Heart right ventricle (tissue), 16 donors: ENCODE measurements at regions of chr4 and their contacts with region 1.

Region 1: GRCh38 chr4:59979061-59979460 is 1221.1 kb upstream of the ADGRL3 start:
- DNase-seq: no peak
- ATAC-seq: no peak
- H3K4me3 ChIP-seq: no peak overlapping the region
- H3K27ac ChIP-seq: no peak overlapping the region
- H3K4me1 ChIP-seq: no peaks in the 10 kb centered on the region
- H3K27me3 ChIP-seq: no peaks in the 10 kb centered on the region
- CTCF ChIP-seq: no peak

Region 2: GRCh38 chr4:59994118-59994517 is 15.1 kb after region 1 on chr4:
- intact Hi-C with region 1: loop called in 1 of 10 experiments (anchors 1 kb)
- DNase-seq: no peak
- ATAC-seq: peak in 1 of 8 donors; percentile 57
- H3K4me3 ChIP-seq: no peak overlapping the region
- H3K27ac ChIP-seq: no peak overlapping the region
- H3K4me1 ChIP-seq: no peaks in the 10 kb centered on the region
- H3K27me3 ChIP-seq: no peaks in the 10 kb centered on the region
- CTCF ChIP-seq: peak in 8 of 9 donors; percentile 12 to 46 (median 36)

Region 3: DNA sequence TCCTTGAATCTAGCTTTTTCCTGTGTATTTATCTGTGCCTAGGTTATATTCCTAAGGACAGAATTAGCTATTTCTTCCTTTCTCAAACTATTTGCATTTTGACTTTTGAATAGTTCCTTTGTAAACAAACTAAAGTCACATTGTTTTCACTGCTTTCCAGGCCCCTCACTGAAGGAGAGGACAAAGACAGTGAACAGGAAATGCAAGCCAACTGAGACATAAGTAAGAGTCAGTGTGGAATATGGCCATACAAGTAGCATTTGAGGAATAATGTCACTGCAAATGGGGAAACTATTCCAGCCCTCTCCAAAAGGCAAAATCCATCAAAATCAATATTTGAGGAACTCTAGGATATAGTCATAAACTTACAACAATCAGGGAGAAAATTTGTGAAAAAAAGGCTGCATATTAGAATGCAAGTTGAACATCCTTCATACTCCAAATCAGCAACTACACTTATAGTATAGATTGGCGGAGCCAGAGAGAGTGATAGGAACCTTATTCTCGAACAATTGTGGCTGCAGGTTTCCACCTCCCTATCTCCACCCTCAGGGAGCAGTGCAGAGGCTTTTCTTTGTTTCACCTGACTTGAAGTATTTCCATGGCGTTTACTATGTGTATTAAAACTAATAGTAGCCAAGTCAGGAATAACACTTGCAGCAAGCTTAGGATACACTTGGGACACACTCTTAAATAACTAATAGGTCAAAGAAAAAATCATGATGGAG is 110.6 kb after region 1 on chr4:
- intact Hi-C with region 1: no loop called
- DNase-seq: no peak
- ATAC-seq: no peak
- H3K4me3 ChIP-seq: no peak overlapping the region
- H3K27ac ChIP-seq: no peak overlapping the region
- H3K4me1 ChIP-seq: no peaks in the 10 kb centered on the region
- H3K27me3 ChIP-seq: no peaks in the 10 kb centered on the region
- CTCF ChIP-seq: no peak